Gastrocnemius medialis (tissue), 4 donors: ENCODE measurements at regions of chr4 and their contacts with region 1.

Region 1: GRCh38 chr4:53141308-53141707 is 224.6 kb downstream of the SCFD2 start:
- DNase-seq: no peak
- ATAC-seq: no peak
- H3K4me3 ChIP-seq: no peak overlapping the region
- H3K27ac ChIP-seq: no peak overlapping the region
- H3K4me1 ChIP-seq: no peaks in the 10 kb centered on the region
- H3K27me3 ChIP-seq: no peaks in the 10 kb centered on the region
- CTCF ChIP-seq: no peak
- POLR2A ChIP-seq: no peak

Region 2: DNA sequence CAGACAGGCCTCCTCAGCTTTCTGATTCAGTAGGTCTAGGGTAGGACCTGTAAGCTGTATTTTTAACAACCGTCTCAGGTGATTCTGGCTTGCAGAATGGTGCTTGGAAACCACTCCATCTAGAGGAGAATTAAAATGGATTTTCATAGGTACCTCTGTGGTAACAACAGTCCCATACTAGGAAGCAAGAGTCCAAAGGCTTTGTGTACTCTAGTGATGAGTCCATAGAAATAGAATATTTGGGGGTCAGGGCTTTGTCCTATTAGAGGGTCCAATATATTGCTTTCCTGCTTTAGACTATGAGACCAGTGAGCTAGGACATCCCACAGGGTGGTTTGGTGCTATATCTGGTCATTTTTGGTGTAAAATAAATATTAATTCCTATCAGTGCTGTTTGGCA is 17.5 kb before region 1 on chr4:
- in situ Hi-C with region 1: no loop called
- intact Hi-C with region 1: loop called (anchors 1 kb)
- DNase-seq: no peak
- ATAC-seq: no peak
- H3K4me3 ChIP-seq: no peak overlapping the region
- H3K27ac ChIP-seq: no peak overlapping the region
- H3K4me1 ChIP-seq: peaks cover 26 to 28% of the 10 kb centered on the region in 2 donors
- H3K27me3 ChIP-seq: no peaks in the 10 kb centered on the region
- CTCF ChIP-seq: no peak
- POLR2A ChIP-seq: no peak